ENCODE measurements at regions of chr1 and their contacts with region 1.

Region 1: DNA sequence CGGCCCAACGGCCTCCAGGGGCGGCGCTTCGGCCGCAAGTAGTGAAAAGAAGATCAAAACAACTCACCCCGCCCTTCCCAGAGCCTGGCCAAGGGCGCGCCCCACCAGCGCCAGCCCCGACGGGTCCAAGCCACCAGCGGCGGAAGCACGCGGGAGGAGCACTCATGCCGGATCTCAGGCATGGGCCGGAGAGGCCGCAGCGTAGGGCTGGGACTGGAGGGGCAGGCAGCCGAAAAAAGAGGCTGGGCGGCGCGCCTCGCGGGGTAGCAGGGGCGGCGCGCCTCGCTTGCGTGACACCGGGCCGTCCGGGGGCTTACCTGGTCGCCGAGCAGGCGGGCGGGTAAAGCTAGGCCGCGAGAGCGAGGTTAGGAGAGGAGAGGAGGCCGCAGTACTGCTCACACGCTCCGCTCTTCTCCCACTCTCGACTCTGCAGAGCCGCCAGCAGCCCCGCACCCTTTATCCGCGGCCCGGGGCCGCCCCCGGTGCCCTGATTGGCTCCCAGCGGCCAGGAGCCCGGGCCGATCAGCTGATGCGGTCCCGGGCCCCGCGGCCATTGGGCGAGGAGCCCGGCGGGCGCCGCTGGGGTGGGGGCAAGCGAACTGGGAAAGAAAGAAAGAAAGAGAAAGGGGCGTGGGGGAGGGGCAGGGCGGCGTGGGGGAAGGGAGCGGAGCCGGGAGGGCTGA is at the start of gene GLUL:
- DNase-seq: peak; percentile 94
- CTCF ChIP-seq: no peak

Region 2: DNA sequence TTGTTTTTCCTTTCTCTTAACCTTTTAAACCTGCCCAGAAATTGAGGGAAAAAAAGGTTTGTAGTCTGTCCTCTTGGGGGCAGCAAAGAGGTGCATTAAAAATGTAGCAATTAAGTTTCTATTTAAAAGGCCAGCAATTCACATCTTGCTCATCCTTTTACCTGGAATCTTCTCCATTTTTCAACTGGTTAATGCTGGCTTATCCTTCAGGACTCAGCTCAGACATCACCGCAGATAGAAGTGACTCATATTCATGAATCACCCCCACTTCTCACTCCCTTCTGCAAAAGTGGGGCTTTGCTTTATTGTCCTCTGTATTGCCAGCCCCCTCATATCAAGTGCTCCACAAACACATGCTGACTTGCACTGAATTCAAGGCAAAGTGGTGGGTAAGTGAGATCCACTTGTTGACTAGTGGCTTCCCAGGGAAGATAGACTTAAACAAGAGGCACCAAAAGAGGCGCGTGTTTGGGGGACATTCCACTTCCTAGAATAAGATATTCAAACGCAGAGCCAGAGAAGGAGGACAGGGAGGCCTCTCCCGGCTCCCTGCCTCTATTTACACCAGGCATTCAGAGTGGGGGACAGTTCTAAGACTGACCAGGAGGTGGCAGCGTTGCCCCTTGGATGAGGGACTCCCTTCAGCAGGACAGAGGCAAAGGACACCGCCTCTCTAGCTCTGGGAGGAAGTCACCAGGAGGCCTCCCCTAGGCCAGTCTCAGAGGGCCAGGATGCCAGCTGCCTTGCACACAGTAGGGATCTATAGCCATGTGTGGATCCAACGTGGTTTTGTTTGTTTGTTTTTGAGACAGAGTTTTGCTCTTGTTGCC is 306.8 kb before region 1 on chr1:
- in situ Hi-C with region 1: loop called (anchors 10 kb)
- DNase-seq: peak; percentile 86
- CTCF ChIP-seq: peak; percentile 75

Region 3: GRCh38 chr1:182962554-182963115 is 571.1 kb after region 1 on chr1:
- in situ Hi-C with region 1: no loop called
- DNase-seq: peak; percentile 85
- CTCF ChIP-seq: peak; percentile 47

Region 4: GRCh38 chr1:183002797-183003196 is 611.3 kb after region 1 on chr1:
- in situ Hi-C with region 1: no loop called
- DNase-seq: no peak
- CTCF ChIP-seq: no peak